ENCODE measurements at regions of chrX and their contacts with region 1.

Region 1: GRCh38 chrX:134622056-134622812 is 36.0 kb downstream of the PLAC1 start:
- DNase-seq: peak; percentile 64
- H3K4me3 Mint-ChIP-seq: no peak overlapping the region
- H3K27ac Mint-ChIP-seq: peak overlapping the region; percentile 25
- H3K4me1 Mint-ChIP-seq: peaks cover 11% of the 10 kb centered on the region
- H3K27me3 Mint-ChIP-seq: peaks cover 3% of the 10 kb centered on the region

Region 2: DNA sequence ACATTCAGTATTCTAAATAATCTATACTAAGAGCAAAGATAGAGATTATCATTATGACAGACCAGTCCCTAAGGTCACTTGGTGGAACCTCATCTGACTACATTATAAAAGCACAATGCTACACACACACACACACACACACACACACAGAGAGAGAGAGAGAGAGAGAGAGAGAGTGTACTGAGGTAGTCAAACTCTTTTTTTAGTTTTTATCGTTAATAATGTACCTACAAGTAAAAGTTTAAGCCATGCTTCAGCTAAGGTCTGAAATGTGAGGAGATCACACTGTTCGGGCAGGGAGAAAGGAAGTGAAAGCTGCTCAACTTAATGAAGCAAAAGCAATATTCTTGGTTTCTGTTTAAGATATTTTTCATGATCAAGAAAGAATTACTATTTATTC is 461.1 kb before region 1 on chrX:
- intact Hi-C with region 1: no loop called
- DNase-seq: no peak
- H3K4me3 Mint-ChIP-seq: peak overlapping the region; percentile 15
- H3K27ac Mint-ChIP-seq: no peak overlapping the region
- H3K4me1 Mint-ChIP-seq: peaks cover 20% of the 10 kb centered on the region
- H3K27me3 Mint-ChIP-seq: no peaks in the 10 kb centered on the region

Region 3: DNA sequence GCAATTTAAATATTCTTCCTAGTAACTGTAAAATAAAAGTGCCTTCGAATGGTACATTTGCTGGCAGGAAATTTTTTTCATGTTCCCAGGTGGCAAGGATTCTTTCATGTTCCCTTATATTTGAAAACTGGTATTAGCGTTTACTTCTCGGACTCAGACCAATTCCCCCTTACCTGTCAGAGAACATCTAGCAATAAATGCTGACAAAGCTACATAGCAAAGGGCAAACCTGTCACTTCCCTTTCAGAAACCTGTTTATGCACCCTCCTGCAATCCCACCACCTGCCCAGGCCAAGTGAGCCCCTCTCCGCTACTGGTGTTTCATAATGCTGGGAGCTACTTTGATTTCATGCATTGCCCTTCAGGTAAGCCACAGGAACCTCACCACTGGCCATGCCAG is 64.1 kb before region 1 on chrX:
- intact Hi-C with region 1: no loop called
- DNase-seq: no peak
- H3K4me3 Mint-ChIP-seq: no peak overlapping the region
- H3K27ac Mint-ChIP-seq: no peak overlapping the region
- H3K4me1 Mint-ChIP-seq: peaks cover 7% of the 10 kb centered on the region
- H3K27me3 Mint-ChIP-seq: peaks cover 30% of the 10 kb centered on the region

Region 4: GRCh38 chrX:134599184-134599914 is 22.9 kb before region 1 on chrX:
- intact Hi-C with region 1: loop called (anchors 1 kb)
- DNase-seq: no peak
- H3K4me3 Mint-ChIP-seq: no peak overlapping the region
- H3K27ac Mint-ChIP-seq: peak overlapping the region; percentile 41
- H3K4me1 Mint-ChIP-seq: peaks cover 4% of the 10 kb centered on the region
- H3K27me3 Mint-ChIP-seq: peaks cover 17% of the 10 kb centered on the region

Region 5: GRCh38 chrX:134634691-134635090 is 12.5 kb after region 1 on chrX:
- intact Hi-C with region 1: no loop called
- DNase-seq: no peak
- H3K4me3 Mint-ChIP-seq: no peak overlapping the region
- H3K27ac Mint-ChIP-seq: peak overlapping the region; percentile 45
- H3K4me1 Mint-ChIP-seq: peaks cover 4% of the 10 kb centered on the region
- H3K27me3 Mint-ChIP-seq: peaks cover 3% of the 10 kb centered on the region

Region 6: DNA sequence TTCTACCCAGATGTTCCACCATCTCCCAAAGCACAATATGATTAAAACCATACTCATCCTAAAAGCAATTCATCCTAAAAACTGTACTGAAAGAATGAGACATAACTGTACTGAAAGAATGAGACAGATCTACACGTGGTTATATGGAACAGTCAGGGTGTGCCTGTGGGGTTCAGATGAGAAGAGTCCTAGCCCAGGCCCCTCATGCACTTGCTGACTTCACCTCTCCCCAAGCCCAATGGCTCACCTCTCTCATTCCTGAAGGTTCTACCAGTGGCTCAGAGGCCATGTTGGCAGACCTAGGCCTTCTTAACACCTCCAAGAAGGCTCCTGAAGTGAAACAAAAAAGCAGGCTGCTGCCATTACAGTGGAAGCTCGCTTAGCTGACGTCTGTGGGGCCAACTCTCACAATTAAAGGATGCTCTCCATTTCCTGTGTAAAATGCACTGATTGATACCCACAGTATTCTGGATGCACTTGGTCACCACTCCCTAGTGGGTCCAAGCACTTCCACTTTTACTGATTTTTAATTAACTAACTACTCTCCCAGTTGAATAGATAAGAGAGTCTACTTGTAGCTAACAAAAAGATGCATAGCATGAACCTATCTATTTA is 32.3 kb after region 1 on chrX:
- intact Hi-C with region 1: loop called (anchors 2 kb)
- DNase-seq: peak; percentile 51
- H3K4me3 Mint-ChIP-seq: no peak overlapping the region
- H3K27ac Mint-ChIP-seq: no peak overlapping the region
- H3K4me1 Mint-ChIP-seq: peaks cover 8% of the 10 kb centered on the region
- H3K27me3 Mint-ChIP-seq: peaks cover 2% of the 10 kb centered on the region

Region 7: GRCh38 chrX:134665037-134665436 is 42.8 kb after region 1 on chrX:
- intact Hi-C with region 1: no loop called
- DNase-seq: no peak
- H3K4me3 Mint-ChIP-seq: no peak overlapping the region
- H3K27ac Mint-ChIP-seq: no peak overlapping the region
- H3K4me1 Mint-ChIP-seq: no peaks in the 10 kb centered on the region
- H3K27me3 Mint-ChIP-seq: peaks cover 2% of the 10 kb centered on the region

Region 8: GRCh38 chrX:134718105-134718965 is 96.1 kb after region 1 on chrX:
- intact Hi-C with region 1: loop called (anchors 5 kb)
- DNase-seq: peak; percentile 54
- H3K4me3 Mint-ChIP-seq: no peak overlapping the region
- H3K27ac Mint-ChIP-seq: peak overlapping the region; percentile 52
- H3K4me1 Mint-ChIP-seq: peaks cover 10% of the 10 kb centered on the region
- H3K27me3 Mint-ChIP-seq: peaks cover 1% of the 10 kb centered on the region